Mammary epithelial cell (primary cell): ENCODE measurements at regions of chr1 and their contacts with region 1.

Region 1: DNA sequence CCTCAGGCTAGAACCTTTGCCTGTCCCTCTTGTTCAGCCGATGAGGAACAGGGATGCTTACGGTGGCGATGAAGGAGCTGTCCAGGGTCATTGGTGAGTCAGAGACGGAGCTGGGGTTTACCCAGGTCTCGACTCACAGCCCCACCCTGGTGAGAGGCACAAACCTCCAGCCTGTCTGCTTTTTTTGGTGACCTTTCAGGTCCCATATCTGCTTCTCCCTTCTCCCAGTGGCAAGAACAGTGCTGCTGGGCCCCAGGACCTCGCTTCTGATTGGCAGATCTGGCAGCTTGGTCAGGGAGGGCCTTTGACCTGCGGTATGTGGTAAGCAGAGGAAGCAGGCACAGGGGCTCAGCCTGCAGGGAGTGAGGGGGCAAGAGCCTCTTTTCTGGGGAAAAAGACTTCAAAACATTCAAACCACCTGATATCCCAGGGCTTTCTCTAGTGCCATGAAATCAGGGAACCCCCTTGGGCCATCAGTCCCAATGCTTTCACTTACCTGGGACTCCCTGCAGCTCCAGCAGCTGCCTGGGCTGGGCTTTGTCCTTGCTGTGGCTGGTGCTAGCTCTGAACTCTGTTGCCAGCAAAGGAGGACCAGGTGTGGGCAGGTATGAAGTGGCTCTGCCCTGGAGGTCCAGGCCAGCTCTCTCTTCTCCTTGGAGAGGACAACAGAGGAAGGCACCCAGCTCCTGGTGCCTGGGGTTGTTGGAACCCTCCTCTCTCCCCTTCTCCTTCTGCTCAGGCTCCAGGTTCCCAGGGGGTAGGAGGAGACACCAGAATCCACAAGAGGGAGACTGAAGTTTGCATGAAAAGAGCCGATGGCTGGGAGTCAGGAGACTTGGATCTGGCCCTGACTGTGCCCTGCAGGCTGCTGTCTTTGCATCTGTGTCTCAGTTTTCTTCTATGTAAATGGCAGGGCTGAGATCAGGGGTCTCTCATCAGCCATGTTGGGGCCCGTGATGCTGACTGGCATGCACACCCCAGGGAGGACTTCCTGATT is 41.4 kb downstream of the TRIM62 start:
- DNase-seq: peak; percentile 36
- H3K4me3 ChIP-seq: no peak overlapping the region
- H3K27ac ChIP-seq: no peak overlapping the region
- H3K4me1 ChIP-seq: no peaks in the 10 kb centered on the region
- H3K27me3 ChIP-seq: no peaks in the 10 kb centered on the region
- CTCF ChIP-seq: peak in 1 of 2 donors; percentile 8

Region 2: DNA sequence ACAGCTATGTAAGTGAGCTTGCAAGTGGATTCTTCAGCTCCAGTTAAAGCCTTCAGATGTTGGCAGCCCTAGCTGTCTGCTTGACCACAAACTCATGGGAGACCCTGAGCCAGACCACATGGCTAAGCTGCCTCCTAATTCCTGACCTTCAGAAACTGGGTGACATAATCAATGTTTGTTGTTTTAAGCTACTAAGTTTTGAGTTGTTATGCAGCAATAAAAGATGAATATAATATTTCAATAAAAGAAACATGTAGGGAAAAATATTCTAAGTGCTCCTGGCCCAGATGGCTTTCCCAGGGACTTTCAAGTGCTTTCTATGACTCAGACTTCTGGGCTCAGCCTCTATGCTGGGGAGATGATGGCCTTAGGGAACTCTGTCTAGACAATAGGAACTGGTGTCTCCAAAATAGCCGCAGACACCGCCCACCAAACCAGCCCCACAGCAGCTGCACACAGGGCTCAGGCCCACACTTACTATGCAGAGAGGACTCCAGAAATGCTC is 79.8 kb before region 1 on chr1:
- CTCF ChIA-PET with region 1: no interaction called
- dilution Hi-C with region 1: no loop called
- in situ Hi-C with region 1: no loop called
- intact Hi-C with region 1: no loop called
- DNase-seq: peak; percentile 94
- H3K4me3 ChIP-seq: no peak overlapping the region
- H3K27ac ChIP-seq: peak overlapping the region; percentile 39
- H3K4me1 ChIP-seq: peaks cover 18% of the 10 kb centered on the region
- H3K27me3 ChIP-seq: no peaks in the 10 kb centered on the region
- CTCF ChIP-seq: no peak

Region 3: DNA sequence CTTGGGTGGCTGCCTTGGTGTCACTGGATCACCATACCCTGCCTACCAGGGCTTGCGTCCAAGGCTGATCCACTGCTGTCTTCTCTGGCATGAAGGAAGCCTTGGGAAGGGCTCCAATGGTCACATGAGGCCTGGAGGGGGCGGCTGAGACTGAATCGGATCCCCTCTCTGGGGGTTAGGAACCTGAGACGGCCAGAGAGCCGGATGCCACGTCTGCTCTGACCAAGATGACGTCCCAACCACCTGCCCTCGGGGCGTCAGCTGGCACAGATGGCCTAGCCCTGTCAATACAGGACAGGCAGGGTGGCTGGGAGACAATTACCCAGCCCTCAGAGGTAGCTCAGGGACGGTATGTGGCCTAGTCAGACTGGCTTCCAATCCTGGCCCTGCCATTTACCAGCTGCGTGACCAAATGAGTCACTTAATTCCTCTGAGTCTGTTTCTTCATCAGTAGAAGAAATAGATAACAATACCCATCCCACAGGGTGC is 36.0 kb after region 1 on chr1:
- CTCF ChIA-PET with region 1: no interaction called
- dilution Hi-C with region 1: loop called (anchors 5 kb)
- in situ Hi-C with region 1: no loop called
- intact Hi-C with region 1: no loop called
- DNase-seq: peak; percentile 56
- H3K4me3 ChIP-seq: no peak overlapping the region
- H3K27ac ChIP-seq: no peak overlapping the region
- H3K4me1 ChIP-seq: peaks cover 12% of the 10 kb centered on the region
- H3K27me3 ChIP-seq: no peaks in the 10 kb centered on the region
- CTCF ChIP-seq: no peak